Sigmoid colon (tissue), 7 donors: ENCODE measurements at regions of chr10 and their contacts with region 1.

Region 1: GRCh38 chr10:98608411-98608810 is 161.7 kb upstream of the HPS1 start:
- DNase-seq: peak; percentile 79
- H3K4me3 ChIP-seq: no peak overlapping the region
- H3K27ac ChIP-seq: peak overlapping the region in 3 of 4 donors; percentile 71 to 84 (median 84)
- H3K4me1 ChIP-seq: peaks cover 0 to 59% (median 44%) of the 10 kb centered on the region in 4 donors
- H3K27me3 ChIP-seq: no peaks in the 10 kb centered on the region
- CTCF ChIP-seq: no peak
- EP300 ChIP-seq: no peak
- POLR2A ChIP-seq: no peak

Region 2: DNA sequence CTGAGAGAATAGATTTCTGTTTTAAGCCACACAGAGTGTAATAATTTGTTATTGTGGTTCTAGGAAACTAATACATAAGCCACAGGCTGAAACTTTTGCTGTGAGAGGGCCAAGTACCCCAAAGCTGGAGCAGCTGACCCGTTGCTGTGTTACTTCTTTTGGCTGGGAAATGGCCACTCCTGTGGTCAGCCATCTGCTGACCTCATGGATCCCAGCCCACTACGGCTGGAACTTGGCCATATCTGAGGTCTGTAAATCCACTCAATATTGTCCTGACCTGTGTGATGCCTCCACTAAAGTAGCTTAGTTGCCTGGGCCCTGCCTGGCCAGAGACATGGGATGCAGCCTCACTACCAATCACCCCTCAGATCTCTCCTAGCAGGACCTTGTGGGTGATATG is 323.0 kb before region 1 on chr10:
- intact Hi-C with region 1: no loop called
- DNase-seq: no peak
- H3K4me3 ChIP-seq: no peak overlapping the region
- H3K27ac ChIP-seq: no peak overlapping the region
- H3K4me1 ChIP-seq: no peaks in the 10 kb centered on the region
- H3K27me3 ChIP-seq: no peaks in the 10 kb centered on the region
- CTCF ChIP-seq: no peak
- EP300 ChIP-seq: no peak
- POLR2A ChIP-seq: no peak

Region 3: DNA sequence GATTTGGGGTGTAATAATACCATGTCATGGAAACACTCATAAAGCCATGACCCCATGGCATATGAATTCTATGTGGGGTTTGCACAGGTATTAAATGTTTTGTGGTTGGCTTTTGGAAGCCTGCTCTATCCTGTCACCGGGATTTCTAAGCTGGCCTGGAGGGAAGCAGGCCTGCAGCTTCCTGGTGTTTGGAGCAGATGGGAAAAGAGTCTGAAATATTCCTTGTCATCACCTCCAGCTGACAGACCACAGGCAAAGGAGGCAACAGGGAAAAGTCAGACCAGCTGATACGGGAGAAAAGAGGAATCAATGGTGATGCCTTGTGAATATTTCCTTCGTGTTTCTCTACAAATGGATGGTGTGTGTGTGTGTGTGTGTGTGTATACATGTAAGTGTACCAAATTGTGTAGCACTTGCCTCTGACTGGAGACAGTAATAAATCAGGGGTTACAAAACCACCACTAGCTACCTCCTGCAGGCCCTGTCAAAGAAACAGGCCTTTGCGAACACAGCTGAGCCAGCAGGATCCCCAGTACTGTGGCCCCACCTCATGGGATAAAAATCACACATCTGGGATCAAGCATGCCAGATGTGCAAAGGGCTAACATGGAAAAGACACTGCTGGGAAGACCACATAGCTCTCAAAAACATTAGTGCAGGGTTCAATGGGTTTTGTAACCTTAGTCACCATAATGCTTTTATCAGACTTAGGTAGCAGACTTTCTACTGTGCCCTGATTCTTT is 40.8 kb before region 1 on chr10:
- intact Hi-C with region 1: loop called (anchors 5 kb)
- DNase-seq: no peak
- H3K4me3 ChIP-seq: no peak overlapping the region
- H3K27ac ChIP-seq: peak overlapping the region in 2 of 4 donors; percentile 5 to 21
- H3K4me1 ChIP-seq: peaks cover 0 to 31% (median 26%) of the 10 kb centered on the region in 4 donors
- H3K27me3 ChIP-seq: no peaks in the 10 kb centered on the region
- CTCF ChIP-seq: no peak
- EP300 ChIP-seq: no peak
- POLR2A ChIP-seq: no peak

Region 4: DNA sequence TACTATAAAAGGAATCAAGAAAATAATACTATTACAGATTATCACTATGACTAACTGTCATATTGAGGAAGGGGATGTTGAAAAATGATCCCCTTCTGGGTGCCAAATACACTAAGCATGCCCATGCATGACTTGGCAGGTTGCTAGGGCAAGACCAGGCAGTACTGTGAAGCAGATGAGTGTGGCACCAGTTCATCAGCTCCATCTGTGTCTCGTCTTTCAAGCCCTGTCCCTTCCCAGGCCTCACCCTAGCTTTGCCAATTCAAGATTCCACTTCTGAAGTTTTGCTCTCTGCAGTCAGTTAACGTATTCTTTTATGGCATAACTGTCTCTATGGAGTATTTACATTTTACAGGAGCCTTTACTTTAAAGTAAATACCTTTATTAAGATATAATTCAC is 26.0 kb before region 1 on chr10:
- intact Hi-C with region 1: loop called (anchors 2 kb)
- DNase-seq: no peak
- H3K4me3 ChIP-seq: no peak overlapping the region
- H3K27ac ChIP-seq: peak overlapping the region in 2 of 4 donors; percentile 46 to 61
- H3K4me1 ChIP-seq: peaks cover 0 to 51% (median 22%) of the 10 kb centered on the region in 4 donors
- H3K27me3 ChIP-seq: no peaks in the 10 kb centered on the region
- CTCF ChIP-seq: no peak
- EP300 ChIP-seq: no peak
- POLR2A ChIP-seq: no peak

Region 5: GRCh38 chr10:98858525-98858924 is 250.1 kb after region 1 on chr10:
- intact Hi-C with region 1: no loop called
- DNase-seq: no peak
- H3K4me3 ChIP-seq: no peak overlapping the region
- H3K27ac ChIP-seq: no peak overlapping the region
- H3K4me1 ChIP-seq: no peaks in the 10 kb centered on the region
- H3K27me3 ChIP-seq: no peaks in the 10 kb centered on the region
- CTCF ChIP-seq: no peak
- EP300 ChIP-seq: no peak
- POLR2A ChIP-seq: no peak